Sciatic nerve (tissue), 2 donors: ENCODE measurements at regions of chr2 and their contacts with region 1.

Region 1: GRCh38 chr2:11688222-11689069 is 18.5 kb upstream of the NTSR2 start:
- DNase-seq: peak; percentile 91
- ATAC-seq: peak; percentile 85

Region 2: DNA sequence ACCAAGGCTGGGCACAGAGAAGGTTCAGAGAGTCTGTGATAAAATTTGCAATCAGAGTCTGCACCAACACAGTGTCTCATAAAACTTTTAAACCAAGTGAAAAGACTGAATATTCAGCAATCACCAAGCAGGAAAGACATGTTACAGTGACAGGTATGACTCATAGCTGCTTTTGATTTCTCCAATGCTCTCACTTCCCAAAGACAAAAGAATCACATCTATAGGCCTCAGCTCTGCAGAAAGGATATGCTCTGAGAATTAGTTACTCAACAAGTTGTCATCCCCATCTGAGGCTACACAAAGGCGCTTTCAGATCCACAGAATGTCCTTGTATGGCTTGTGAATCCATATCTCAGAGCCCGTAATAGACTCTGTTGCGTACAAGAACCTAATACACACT is 684.2 kb before region 1 on chr2:
- intact Hi-C with region 1: no loop called
- DNase-seq: no peak
- ATAC-seq: no peak

Region 3: DNA sequence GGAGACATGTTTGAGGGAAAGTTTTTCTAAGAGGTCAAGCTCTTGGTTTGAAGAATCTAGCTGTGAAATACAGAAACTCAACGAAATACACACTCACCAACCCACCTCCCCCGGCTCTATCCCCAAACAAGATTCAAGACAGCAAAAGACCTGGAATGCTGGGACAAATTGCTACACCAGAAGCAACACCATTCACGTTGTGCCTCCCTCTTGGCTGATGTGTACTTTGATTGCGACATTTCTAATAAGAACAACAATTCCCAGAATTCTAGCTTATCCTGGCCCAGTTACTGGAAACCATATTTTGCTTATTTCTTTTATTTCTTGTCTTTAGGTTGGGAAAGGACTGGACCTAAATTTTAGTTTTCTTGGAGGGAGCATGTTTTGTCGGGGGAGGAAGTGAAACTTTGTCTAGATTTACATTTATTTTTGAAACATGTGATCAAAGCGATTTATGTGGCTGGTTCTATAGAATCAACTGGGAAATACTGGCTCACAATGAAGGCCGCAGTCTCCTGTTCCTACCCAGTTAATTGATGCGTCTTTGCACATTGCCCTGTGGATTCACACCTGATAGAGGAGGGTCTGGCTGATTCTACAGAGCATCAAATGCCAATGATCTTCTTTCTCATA is 28.4 kb after region 1 on chr2:
- intact Hi-C with region 1: no loop called
- DNase-seq: no peak
- ATAC-seq: peak; percentile 78

Region 4: GRCh38 chr2:11746376-11746806 is 57.9 kb after region 1 on chr2 and contains the start of gene LPIN1:
- intact Hi-C with region 1: loop called (anchors 5 kb)
- DNase-seq: peak; percentile 94
- ATAC-seq: peak; percentile 78
- total RNA-seq, gene LPIN1: 141 TPM

Region 5: GRCh38 chr2:11778923-11779757 is 90.7 kb after region 1 on chr2:
- intact Hi-C with region 1: loop called (anchors 5 kb)
- DNase-seq: peak; percentile 92
- ATAC-seq: peak; percentile 92